Adrenal gland (tissue), 19 donors: ENCODE measurements at regions of chr1 and their contacts with region 1.

Region 1: GRCh38 chr1:202122639-202123335 is at the start of gene GPR37L1:
- DNase-seq: peak; percentile 78 to 89 (median 84)
- H3K4me3 ChIP-seq: no peak within 1 kb of the TSS
- H3K27ac ChIP-seq: no peak within 1 kb of the TSS
- H3K4me1 ChIP-seq: no peaks in the 10 kb centered on the region
- H3K27me3 ChIP-seq: no peaks in the 10 kb centered on the region
- CTCF ChIP-seq: peak; percentile 48 to 80 (median 68)
- POLR2A ChIP-seq: no peak
- total RNA-seq, gene GPR37L1: under 0.01 to 0.49 (median 0.28) TPM in 8 of 9 donors, not detected in the other

Region 2: GRCh38 chr1:201895913-201896807 is 226.6 kb before region 1 on chr1:
- intact Hi-C with region 1: loop called (anchors 10 kb)
- DNase-seq: peak; percentile 91 to 97 (median 93)
- H3K4me3 ChIP-seq: no peak overlapping the region
- H3K27ac ChIP-seq: peak overlapping the region in 3 of 5 donors; percentile 31 to 82 (median 46)
- H3K4me1 ChIP-seq: peaks cover 0 to 9% of the 10 kb centered on the region in 2 donors
- H3K27me3 ChIP-seq: no peaks in the 10 kb centered on the region
- CTCF ChIP-seq: peak; percentile 92 to 98 (median 97)
- POLR2A ChIP-seq: no peak

Region 3: DNA sequence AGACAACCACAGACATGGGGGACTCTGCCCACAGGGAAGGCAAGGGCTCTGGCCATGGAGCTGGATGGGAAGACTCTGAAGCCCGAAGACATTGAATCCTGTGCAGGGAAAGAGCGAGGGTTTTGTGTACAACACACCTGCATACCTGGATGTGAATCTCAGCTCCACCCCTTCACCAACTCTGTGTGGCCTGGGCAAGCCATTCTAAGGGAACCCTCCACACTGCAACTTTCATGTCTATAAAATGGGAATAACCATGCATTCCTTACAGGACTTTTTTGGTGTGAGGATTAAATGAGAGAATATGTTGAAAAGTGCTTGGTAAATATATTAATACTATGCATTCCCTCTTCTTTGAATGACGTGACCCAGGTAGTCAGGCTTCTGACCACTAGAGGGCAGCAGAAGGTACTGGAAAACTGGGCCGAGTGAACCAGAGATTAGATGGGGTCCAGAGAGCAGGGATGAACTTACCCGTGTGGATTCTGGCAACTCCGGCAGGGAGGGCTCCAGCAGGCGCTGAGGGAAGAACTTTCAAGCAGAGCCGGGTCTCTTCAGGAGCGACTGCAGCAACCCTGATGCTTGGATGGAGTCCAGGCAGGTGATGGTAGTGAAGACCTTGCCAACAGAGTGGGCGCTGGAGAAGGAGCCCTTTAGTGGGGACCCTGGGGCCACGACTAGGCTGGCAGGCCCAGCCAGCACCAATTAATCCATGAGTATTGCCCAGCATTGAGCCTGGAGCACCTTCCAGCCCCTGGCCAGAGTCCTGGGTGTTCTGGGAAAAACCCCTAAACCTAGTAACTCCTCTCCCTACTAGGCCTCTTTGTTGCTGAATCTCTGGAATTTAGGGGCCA is 113.2 kb before region 1 on chr1:
- intact Hi-C with region 1: loop called (anchors 2 to 5 kb)
- DNase-seq: peak; percentile 65 to 91 (median 80)
- H3K4me3 ChIP-seq: no peak overlapping the region
- H3K27ac ChIP-seq: peak overlapping the region in 1 of 5 donors; percentile 6
- H3K4me1 ChIP-seq: no peaks in the 10 kb centered on the region
- H3K27me3 ChIP-seq: no peaks in the 10 kb centered on the region
- CTCF ChIP-seq: peak; percentile 80 to 90 (median 85)
- POLR2A ChIP-seq: no peak